IMR-90 (cell line): ENCODE measurements at regions of chr1 and their contacts with region 1.

Region 1: GRCh38 chr1:178607718-178608408 is 95.0 kb downstream of the TEX35 start:
- DNase-seq: no peak
- ATAC-seq: no peak
- H3K4me3 ChIP-seq: no peak overlapping the region
- H3K27ac ChIP-seq: peak overlapping the region; percentile 99
- H3K4me1 ChIP-seq: peaks cover 31% of the 10 kb centered on the region
- H3K27me3 ChIP-seq: no peaks in the 10 kb centered on the region
- CTCF ChIP-seq: no peak
- POLR2A ChIP-seq: no peak
- RAD21 ChIP-seq: no peak

Region 2: DNA sequence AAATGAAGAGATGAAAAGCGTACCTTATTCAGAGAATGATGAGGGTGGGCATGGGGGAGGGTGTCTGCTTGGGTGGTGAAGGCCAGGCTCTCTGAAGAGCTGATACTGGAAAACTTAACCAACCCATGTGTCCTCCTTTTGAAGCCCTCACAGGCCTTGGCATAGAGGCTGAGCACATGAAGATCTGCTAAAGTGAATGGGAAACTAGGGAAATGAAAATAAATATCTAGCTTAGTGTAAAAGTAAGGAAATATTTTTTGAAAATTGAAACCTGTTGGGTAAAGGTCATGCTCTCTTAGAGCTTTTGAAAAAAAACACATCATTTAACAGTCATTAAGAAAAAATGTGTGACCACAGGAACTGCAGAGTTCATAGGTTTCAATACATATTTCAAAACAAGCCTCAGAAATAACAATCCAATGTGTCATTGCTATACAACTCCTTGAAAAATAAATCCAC is 76.7 kb after region 1 on chr1:
- CTCF ChIA-PET with region 1: no interaction called
- POLR2A ChIA-PET with region 1: no interaction called
- dilution Hi-C with region 1: no loop called
- in situ Hi-C with region 1: no loop called
- intact Hi-C with region 1: loop called (anchors 2 kb)
- DNase-seq: peak; percentile 96
- ATAC-seq: peak; percentile 85
- H3K4me3 ChIP-seq: no peak overlapping the region
- H3K27ac ChIP-seq: peak overlapping the region; percentile 89
- H3K4me1 ChIP-seq: peaks cover 17% of the 10 kb centered on the region
- H3K27me3 ChIP-seq: no peaks in the 10 kb centered on the region
- CTCF ChIP-seq: no peak
- POLR2A ChIP-seq: no peak
- RAD21 ChIP-seq: no peak

Region 3: DNA sequence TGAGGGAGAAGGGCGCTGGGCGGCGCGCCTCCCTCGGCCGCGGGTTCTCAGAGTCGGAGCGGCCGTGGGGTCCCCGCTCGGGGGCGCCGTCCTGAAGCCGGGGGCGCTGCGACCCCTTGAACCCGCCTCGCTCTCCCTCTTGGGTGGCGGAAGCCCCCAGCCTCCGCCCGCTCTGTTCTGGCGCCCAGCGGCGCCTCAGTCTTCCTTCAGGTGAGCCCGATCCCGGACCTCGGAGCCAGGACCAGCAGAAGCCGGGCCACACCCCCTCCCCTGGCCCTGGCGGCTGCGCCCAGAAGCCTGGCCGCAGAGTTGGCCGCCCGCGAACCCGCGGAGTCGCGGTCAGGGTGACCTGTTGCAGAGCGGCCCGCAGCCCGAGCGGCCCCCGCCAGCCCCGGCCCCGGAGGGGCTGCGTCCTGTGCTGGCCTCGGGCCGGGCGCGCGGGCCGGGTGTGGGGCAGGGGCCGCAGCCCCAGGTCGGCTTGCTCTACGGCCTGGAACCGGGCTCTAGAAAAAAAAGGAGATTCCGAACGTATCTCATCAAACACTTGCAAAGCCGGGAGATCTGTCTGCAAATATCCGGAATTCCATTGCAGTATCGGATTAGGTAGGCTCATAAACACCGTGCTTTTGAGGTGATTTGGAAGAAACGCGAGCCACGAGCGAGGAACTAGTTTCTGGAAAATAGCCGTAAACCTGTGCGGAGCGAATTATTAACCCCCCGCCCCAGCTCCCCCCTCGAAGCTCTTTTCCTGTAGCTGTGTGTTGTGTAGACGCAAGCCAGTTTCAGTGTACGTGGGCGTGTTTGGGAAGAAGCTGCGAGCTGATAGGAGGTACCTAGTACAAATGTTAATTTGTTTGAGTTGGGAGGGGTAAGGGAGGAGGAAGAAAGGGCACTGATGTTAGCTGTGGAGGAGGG is 118.0 kb after region 1 on chr1:
- CTCF ChIA-PET with region 1: no interaction called
- POLR2A ChIA-PET with region 1: no interaction called
- dilution Hi-C with region 1: no loop called
- in situ Hi-C with region 1: no loop called
- intact Hi-C with region 1: loop called (anchors 1 kb)
- DNase-seq: peak; percentile 84
- ATAC-seq: peak; percentile 61
- H3K4me3 ChIP-seq: peak overlapping the region; percentile 91
- H3K27ac ChIP-seq: peak overlapping the region; percentile 76
- H3K4me1 ChIP-seq: no peaks in the 10 kb centered on the region; the same call in 1 of the 2 replicates
- H3K27me3 ChIP-seq: no peaks in the 10 kb centered on the region
- CTCF ChIP-seq: no peak
- POLR2A ChIP-seq: no peak
- RAD21 ChIP-seq: no peak